ENCODE measurements at regions of chr2 and their contacts with region 1.

Region 1: GRCh38 chr2:78251708-78252107 is 729.5 kb upstream of the LRRTM4 start:
- DNase-seq: no peak
- H3K4me3 ChIP-seq: no peak overlapping the region
- H3K27ac ChIP-seq: no peak overlapping the region
- H3K4me1 ChIP-seq: no peaks in the 10 kb centered on the region
- H3K27me3 ChIP-seq: no peaks in the 10 kb centered on the region
- CTCF ChIP-seq: no peak

Region 2: GRCh38 chr2:76270096-76270726 is 1981.5 kb before region 1 on chr2:
- CTCF ChIA-PET with region 1: no interaction called
- POLR2A ChIA-PET with region 1: no interaction called
- intact Hi-C with region 1: loop called (anchors 10 kb)
- DNase-seq: no peak
- H3K4me3 ChIP-seq: no peak overlapping the region
- H3K27ac ChIP-seq: no peak overlapping the region
- H3K4me1 ChIP-seq: peaks cover 25% of the 10 kb centered on the region
- H3K27me3 ChIP-seq: no peaks in the 10 kb centered on the region
- CTCF ChIP-seq: no peak

Region 3: DNA sequence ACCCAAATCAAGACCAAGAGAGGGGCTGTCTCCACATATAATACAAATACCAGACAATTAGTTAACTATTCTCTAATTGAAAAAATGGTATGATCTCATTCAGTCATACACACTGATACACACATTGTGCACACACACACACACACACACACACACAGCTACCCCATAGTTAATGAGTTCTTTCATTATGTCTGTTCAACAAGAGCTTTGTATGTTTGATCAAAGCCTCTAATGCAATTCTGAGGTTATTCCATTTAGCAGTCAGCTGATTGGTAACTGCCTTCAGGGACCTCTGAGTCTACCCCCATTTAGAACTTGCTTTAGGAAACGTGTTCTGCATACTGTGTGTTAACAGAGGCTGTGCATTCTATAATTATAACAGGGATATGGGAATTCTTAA is 11.9 kb after region 1 on chr2:
- CTCF ChIA-PET with region 1: no interaction called
- POLR2A ChIA-PET with region 1: no interaction called
- intact Hi-C with region 1: loop called (anchors 1 kb)
- DNase-seq: no peak
- H3K4me3 ChIP-seq: no peak overlapping the region
- H3K27ac ChIP-seq: no peak overlapping the region
- H3K4me1 ChIP-seq: peaks cover 15% of the 10 kb centered on the region
- H3K27me3 ChIP-seq: no peaks in the 10 kb centered on the region
- CTCF ChIP-seq: no peak